Ascending aorta (tissue), 2 donors: ENCODE measurements at regions of chr4 and their contacts with region 1.

Region 1: GRCh38 chr4:4995103-4995907 is 24.0 kb downstream of the CYTL1 start:
- DNase-seq: peak in 1 of 2 donors; percentile 85
- H3K4me3 ChIP-seq: no peak overlapping the region
- H3K27ac ChIP-seq: no peak overlapping the region
- H3K4me1 ChIP-seq: peaks cover 3 to 7% of the 10 kb centered on the region in 2 donors
- H3K27me3 ChIP-seq: no peaks in the 10 kb centered on the region
- CTCF ChIP-seq: peak; percentile 62 to 88 (median 84)

Region 2: DNA sequence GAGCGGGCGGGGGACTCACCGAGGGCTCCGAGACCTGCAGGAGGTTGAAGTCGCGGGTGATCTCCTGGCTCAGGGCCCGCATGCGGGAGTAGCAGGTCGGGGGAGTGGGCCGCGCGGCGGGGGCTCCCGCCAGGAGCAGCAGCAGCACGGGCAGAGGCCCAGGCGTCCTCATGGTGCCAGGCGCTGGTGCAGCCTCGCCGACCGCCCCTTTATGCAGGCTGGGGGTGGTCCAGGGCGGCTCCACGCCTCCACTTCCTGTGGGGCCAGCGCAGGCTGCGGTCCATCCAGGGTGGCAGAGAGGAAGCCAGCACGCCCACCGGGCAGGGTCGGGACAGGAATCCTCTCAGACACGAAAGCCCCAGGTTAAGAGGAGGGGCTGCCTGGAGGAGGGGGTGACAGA is 24.0 kb after region 1 on chr4 and contains the start of gene CYTL1:
- intact Hi-C with region 1: no loop called
- DNase-seq: no peak
- H3K4me3 ChIP-seq: peak within 1 kb of the TSS; percentile 26 to 43
- H3K27ac ChIP-seq: no peak within 1 kb of the TSS
- H3K4me1 ChIP-seq: peaks cover 0 to 5% of the 10 kb centered on the region in 2 donors
- H3K27me3 ChIP-seq: no peaks in the 10 kb centered on the region
- CTCF ChIP-seq: no peak
- total RNA-seq, gene CYTL1: 0.85 TPM

Region 3: GRCh38 chr4:5050520-5051277 is 55.4 kb after region 1 on chr4:
- intact Hi-C with region 1: loop called (anchors 5 kb)
- DNase-seq: peak in 1 of 2 donors; percentile 80
- H3K4me3 ChIP-seq: peak overlapping the region; percentile 47 to 62
- H3K27ac ChIP-seq: no peak overlapping the region
- H3K4me1 ChIP-seq: peaks cover 0 to 2% of the 10 kb centered on the region in 2 donors
- H3K27me3 ChIP-seq: no peaks in the 10 kb centered on the region
- CTCF ChIP-seq: peak; percentile 56 to 70 (median 60)

Region 4: DNA sequence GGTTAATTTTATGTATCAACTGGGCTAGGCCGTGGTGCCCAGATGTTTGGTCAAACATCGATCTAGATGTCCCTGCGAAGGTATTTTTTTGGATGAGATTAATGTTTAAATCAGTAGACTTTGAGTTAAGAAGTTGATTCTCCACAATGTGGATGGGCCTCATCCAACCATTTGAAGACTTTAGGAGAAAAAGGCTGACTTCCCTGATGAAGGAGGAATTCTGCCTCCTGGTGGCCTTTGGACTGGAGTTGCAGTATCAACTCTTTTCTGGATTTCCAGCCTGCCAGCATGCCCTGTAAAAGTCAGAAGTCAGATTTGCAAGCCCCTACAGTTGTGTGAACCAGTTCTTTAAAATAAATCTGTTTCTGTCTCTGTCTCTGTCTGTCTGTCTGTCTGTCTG is 147.4 kb after region 1 on chr4:
- intact Hi-C with region 1: loop called (anchors 1 kb)
- DNase-seq: no peak
- H3K4me3 ChIP-seq: no peak overlapping the region
- H3K27ac ChIP-seq: no peak overlapping the region
- H3K4me1 ChIP-seq: no peaks in the 10 kb centered on the region
- H3K27me3 ChIP-seq: no peaks in the 10 kb centered on the region
- CTCF ChIP-seq: peak; percentile 28 to 53 (median 38)